ENCODE measurements at regions of chr1 and their contacts with region 1.

Region 1: DNA sequence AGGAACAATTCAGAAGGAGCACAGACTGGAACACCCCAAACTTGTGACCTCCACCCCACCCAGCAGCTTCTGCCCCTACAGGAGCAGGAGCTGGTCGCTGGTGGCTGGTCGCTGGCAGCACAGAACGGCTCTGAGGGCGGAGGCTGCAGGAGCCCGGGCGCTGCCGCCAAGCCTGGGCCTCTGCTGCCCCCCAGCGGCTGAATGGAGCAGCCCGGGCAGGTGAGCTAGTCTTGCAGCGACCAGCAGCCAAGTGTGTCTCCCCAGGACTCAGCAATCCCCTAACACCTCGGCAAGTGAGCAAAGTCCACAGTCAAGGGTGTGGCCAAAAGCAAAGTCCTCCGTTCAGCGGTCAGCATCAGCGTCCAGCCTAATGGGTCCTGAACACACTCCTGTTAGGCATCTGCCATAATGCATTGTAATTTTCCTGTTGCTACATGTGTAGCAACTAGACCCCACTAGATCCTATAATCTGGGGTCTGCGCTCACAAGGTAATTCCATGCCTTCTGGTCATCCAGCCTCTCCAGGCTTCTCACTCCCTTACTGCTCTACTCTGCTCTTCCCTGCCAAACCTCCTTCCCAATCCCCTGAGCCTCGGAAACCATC is 12.1 kb upstream of the GJB5 start:
- H3K4me3 Mint-ChIP-seq: no peak overlapping the region
- H3K27ac Mint-ChIP-seq: no peak overlapping the region
- H3K4me1 Mint-ChIP-seq: no peaks in the 10 kb centered on the region
- H3K27me3 Mint-ChIP-seq: peaks cover 10% of the 10 kb centered on the region

Region 2: GRCh38 chr1:33633019-33633801 is 1109.6 kb before region 1 on chr1:
- intact Hi-C with region 1: loop called (anchors 5 kb)
- H3K4me3 Mint-ChIP-seq: no peak overlapping the region
- H3K27ac Mint-ChIP-seq: no peak overlapping the region
- H3K4me1 Mint-ChIP-seq: no peaks in the 10 kb centered on the region
- H3K27me3 Mint-ChIP-seq: peaks cover 28% of the 10 kb centered on the region

Measured in dendritic cell treated with granulocyte-macrophage colony-stimulating factor and Interleukin-4, amounts not matched to agents 40 ng/mL and 50 ng/mL, for 4 days (primary cell).